ENCODE measurements at regions of chr10 and their contacts with region 1.

Region 1: DNA sequence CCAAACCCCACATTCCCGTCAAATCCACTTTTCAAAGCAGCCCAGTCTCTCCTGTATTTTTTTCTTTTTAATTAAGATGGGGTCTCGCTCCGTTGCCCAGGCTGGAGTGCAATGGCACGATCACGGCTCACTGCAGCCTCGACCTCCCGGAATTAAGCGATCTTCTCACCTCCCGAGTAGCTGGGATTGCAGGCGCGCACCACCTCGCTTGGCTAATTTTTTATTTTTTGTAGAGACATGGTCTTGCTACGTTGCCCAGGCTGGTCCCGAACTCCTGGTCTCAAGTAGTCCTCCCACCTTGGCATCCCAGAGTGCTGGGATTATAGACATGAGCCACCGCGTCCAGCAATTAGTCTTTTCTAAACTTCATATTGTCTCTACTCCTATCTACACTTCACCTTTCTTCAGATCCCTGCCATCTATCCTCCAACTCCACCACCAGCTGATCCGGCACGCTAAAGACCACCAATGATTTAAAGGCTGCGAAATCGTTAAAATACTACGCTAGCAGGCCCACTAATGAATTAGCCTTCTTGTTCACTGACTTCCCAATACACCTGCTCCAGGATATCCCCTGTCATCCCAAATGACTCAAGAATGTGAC is 525 bp upstream of the CHUK start:
- DNase-seq: peak; percentile 12
- ATAC-seq: no peak
- H3K4me3 ChIP-seq: peak overlapping the region; percentile 81 to 98 (median 88)
- H3K4me3 Mint-ChIP-seq: peak overlapping the region; percentile 96
- H3K27ac ChIP-seq: peak overlapping the region; percentile 71 to 87
- H3K27ac Mint-ChIP-seq: peak overlapping the region; percentile 90
- H3K4me1 ChIP-seq: peaks cover 9 to 26% of the 10 kb centered on the region in 2 donors
- H3K4me1 Mint-ChIP-seq: peaks cover 26% of the 10 kb centered on the region
- H3K27me3 ChIP-seq: no peaks in the 10 kb centered on the region
- H3K27me3 Mint-ChIP-seq: no peaks in the 10 kb centered on the region
- CTCF ChIP-seq: no peak

Region 2: DNA sequence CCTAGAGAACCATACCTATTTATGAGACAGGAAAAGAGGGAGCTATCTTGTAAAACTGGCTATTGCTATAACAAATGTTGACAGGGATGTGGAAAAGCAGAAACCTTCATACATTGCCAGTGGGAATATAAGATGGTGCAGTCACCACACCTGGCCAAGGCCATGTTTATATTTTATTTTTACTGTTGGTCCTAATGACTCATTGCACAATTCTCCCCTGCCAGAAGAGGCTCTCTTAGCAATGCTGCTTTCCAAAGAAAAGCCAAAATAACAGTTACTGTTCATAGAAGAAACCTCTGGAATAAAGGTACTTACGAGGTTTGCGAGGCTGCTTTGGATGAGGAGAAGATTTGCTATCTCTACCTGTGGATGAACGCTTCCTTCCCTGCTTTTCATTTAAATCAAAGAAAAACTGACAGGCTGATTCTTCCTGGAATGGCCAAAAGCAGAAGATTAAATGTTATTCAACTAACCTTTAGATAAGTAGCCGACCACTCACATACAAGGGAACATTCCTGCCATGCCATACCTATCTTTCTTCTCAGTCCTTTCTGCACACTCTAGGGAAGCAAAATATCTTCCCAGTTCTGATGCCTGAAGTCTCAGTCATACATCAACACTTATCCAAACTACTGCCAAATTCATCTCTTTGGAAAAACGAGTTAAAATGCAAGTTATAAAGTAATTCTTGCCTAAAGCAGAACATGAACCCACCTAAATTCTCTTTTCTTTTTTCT is 15.7 kb after region 1 on chr10:
- CTCF ChIA-PET with region 1: interaction called, 3 read pairs
- POLR2A ChIA-PET with region 1: interaction called, 11 read pairs
- intact Hi-C with region 1: no loop called
- DNase-seq: no peak
- ATAC-seq: no peak
- H3K4me3 ChIP-seq: no peak overlapping the region
- H3K4me3 Mint-ChIP-seq: no peak overlapping the region
- H3K27ac ChIP-seq: no peak overlapping the region
- H3K27ac Mint-ChIP-seq: no peak overlapping the region
- H3K4me1 ChIP-seq: no peaks in the 10 kb centered on the region
- H3K4me1 Mint-ChIP-seq: peaks cover under 1% of the 10 kb centered on the region
- H3K27me3 ChIP-seq: no peaks in the 10 kb centered on the region
- H3K27me3 Mint-ChIP-seq: no peaks in the 10 kb centered on the region
- CTCF ChIP-seq: no peak

Region 3: DNA sequence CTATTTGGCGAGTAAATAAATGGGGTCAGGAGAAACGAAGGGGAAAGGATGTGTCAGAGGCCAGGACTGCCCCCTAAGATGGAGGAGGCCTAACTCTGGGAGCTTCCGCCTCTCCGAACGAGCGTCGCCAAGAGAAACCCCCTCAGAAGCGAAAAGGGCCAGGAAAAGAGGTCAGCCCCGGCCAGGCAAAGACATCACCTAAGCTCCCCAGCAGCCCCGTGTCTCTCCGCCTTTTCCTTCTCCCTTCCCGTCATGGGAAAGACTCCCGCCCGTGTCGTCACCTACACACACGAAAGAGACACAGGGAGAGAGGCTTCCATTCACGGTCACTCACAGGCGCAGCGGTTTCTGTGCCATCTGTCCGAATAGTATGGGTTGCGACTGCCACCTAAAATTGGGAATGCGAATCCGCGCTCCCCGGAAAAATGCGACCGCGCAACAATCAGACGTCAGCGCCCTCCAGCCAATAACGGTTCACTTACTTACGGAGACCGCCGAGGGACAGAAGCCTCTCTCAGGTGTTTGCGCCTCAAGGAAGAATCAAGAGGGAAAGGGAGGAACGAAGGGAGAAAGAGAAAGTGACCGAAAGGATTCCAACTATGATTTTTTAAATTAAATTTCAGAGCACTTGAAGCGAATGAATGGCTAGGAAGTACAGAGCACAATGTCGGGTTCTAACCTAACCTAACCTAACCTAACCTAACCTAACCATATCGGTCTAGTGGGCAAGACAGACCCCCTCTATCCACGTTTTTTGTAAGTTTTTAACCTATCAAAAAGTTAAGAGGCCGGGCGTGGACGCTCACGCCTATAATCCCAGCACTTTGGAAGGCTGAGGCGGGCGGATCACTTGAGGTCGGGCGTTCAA is 37.5 kb after region 1 on chr10 and contains the start of gene CWF19L1:
- CTCF ChIA-PET with region 1: no interaction called
- POLR2A ChIA-PET with region 1: no interaction called
- intact Hi-C with region 1: loop called (anchors 1 kb)
- DNase-seq: peak; percentile 84
- ATAC-seq: peak; percentile 85
- H3K4me3 ChIP-seq: peak within 1 kb of the TSS; percentile 78 to 100 (median 100)
- H3K4me3 Mint-ChIP-seq: peak within 1 kb of the TSS; percentile 97
- H3K27ac ChIP-seq: peak within 1 kb of the TSS; percentile 87 to 88
- H3K27ac Mint-ChIP-seq: peak within 1 kb of the TSS; percentile 99
- H3K4me1 ChIP-seq: peaks cover 23 to 25% of the 10 kb centered on the region in 2 donors
- H3K4me1 Mint-ChIP-seq: peaks cover 31% of the 10 kb centered on the region
- H3K27me3 ChIP-seq: no peaks in the 10 kb centered on the region
- H3K27me3 Mint-ChIP-seq: no peaks in the 10 kb centered on the region
- CTCF ChIP-seq: no peak
- total RNA-seq, gene CWF19L1: 48.3 and 52.8 TPM in 2 replicates

Region 4: DNA sequence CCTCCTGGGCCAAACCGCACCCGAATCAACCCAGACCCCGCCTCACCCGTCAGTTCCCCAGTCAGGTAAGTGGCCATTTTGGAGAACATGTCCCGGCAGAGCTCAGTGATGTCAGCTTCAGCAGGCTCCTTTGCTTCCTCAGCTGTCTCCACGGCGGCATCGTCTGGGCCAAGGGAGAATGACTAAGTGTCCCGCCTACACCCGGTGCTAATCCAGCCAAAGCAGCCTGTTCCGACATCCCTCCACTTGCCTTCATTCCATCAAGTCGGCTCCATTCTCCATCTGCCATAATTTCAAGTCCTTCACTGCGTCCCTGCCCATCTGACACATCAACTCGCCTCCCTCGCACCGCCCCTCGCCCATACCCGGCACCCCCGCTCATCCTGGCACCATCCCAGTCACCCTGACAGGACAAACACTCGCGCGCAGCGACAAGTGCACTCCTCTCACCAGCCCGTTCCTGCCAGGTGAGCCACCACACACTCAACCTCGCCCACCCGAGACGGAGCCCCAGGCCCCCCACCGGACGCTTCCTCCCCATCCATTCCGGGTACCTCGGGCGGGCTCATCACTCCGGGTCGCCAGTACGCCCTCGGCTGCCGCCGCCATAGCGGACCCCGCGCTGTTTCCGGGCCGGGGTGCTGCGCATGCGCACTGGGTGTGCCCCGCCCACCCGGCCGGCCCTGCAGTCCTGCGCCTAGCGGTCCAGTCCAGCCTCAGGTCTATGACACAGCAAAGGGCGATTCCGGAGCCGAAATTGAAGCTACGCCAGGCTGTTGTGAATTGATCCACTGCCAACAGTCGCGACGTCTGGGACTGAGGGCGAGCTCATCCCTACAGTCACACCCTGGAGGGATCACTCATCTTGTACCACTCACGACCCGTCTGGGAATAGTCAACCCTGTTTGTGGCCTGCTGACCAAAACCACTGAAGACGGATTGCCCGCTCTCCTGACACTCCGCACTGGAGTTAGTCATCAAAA is 56.4 kb after region 1 on chr10 and contains the start of gene BLOC1S2:
- CTCF ChIA-PET with region 1: no interaction called
- POLR2A ChIA-PET with region 1: no interaction called
- intact Hi-C with region 1: loop called (anchors 1 kb)
- DNase-seq: peak; percentile 91
- ATAC-seq: peak; percentile 90
- H3K4me3 ChIP-seq: peak within 1 kb of the TSS; percentile 69 to 100 (median 99)
- H3K4me3 Mint-ChIP-seq: peak within 1 kb of the TSS; percentile 98
- H3K27ac ChIP-seq: peak within 1 kb of the TSS; percentile 92 to 96
- H3K27ac Mint-ChIP-seq: peak within 1 kb of the TSS; percentile 96
- H3K4me1 ChIP-seq: peaks cover 48 to 53% of the 10 kb centered on the region in 2 donors
- H3K4me1 Mint-ChIP-seq: peaks cover 35% of the 10 kb centered on the region
- H3K27me3 ChIP-seq: no peaks in the 10 kb centered on the region
- H3K27me3 Mint-ChIP-seq: peaks cover 1% of the 10 kb centered on the region
- CTCF ChIP-seq: no peak
- total RNA-seq, gene BLOC1S2: 47.2 and 47.5 TPM in 2 replicates

Region 5: GRCh38 chr10:100687143-100688003 is 457.5 kb after region 1 on chr10:
- CTCF ChIA-PET with region 1: no interaction called
- POLR2A ChIA-PET with region 1: no interaction called
- intact Hi-C with region 1: no loop called
- DNase-seq: no peak
- ATAC-seq: no peak
- H3K4me3 ChIP-seq: no peak overlapping the region
- H3K4me3 Mint-ChIP-seq: no peak overlapping the region
- H3K27ac ChIP-seq: no peak overlapping the region
- H3K27ac Mint-ChIP-seq: no peak overlapping the region
- H3K4me1 ChIP-seq: peaks cover 0 to 3% of the 10 kb centered on the region in 2 donors
- H3K4me1 Mint-ChIP-seq: no peaks in the 10 kb centered on the region
- H3K27me3 ChIP-seq: peaks cover 0 to 60% (median 40%) of the 10 kb centered on the region in 4 experiments
- H3K27me3 Mint-ChIP-seq: peaks cover 82% of the 10 kb centered on the region
- CTCF ChIP-seq: no peak